CD4-positive, alpha-beta memory T cell (primary cell): ENCODE measurements at regions of chr16 and their contacts with region 1.

Region 1: GRCh38 chr16:370443-370842 is at the start of gene MRPL28:
- DNase-seq: peak; percentile 90 to 95 (median 91)
- H3K4me3 ChIP-seq: peak within 1 kb of the TSS in 1 of 2 donors; percentile 19
- H3K4me3 Mint-ChIP-seq: peak within 1 kb of the TSS; percentile 81 to 96 (median 92)
- H3K27ac ChIP-seq: peak within 1 kb of the TSS; percentile 42
- H3K27ac Mint-ChIP-seq: peak within 1 kb of the TSS; percentile 73 to 95 (median 94)
- H3K4me1 ChIP-seq: peaks cover 26% of the 10 kb centered on the region
- H3K4me1 Mint-ChIP-seq: peaks cover 3 to 20% (median 13%) of the 10 kb centered on the region in 4 donors
- H3K27me3 ChIP-seq: no peaks in the 10 kb centered on the region
- H3K27me3 Mint-ChIP-seq: no peaks in the 10 kb centered on the region
- total RNA-seq, gene MRPL28: 27.9 to 29.2 TPM

Region 2: DNA sequence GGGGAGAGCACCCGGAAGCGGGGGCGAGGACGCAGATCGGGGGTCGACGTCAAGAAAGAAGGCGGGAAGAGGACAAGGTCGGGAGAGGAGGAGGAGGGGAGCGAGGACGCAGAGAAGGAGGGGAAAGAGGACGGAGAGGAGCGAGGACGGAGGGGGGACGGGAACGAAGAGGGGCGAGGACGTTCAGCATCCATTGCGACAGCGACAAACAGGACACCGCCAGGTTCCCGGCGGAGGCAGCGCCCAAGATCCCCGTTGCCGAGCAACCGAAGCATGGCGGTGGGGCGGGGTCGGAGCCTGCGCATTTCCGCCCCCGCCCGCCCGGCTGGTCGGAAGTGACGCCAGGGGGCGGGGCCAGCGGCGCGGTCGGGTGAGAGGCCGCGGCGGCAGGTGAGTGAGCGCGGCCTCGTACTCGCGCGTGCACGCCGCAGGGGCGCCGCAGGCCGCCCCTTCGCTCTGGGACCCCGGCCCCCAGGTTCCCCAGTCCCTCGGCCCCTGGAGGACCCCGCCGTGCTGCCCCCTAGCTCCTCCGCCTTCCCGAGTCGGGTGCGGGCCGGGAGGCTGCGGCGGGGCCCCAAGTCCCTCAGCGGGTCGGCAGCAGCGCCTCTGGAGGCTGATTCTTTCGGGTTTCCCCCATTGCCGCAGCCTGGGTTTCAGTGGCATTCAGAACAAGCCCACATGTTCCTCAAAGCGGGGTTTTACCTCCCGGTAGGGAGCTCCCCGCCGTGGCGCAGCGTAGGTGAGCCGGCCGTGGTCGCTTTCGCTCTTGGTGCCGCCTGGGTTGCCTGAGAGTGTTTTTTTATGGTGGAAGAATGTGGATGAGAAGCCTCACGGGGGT is 135.8 kb before region 1 on chr16 and contains the start of gene FAM234A:
- CTCF ChIA-PET with region 1: no interaction called
- POLR2A ChIA-PET with region 1: interaction called, 10 read pairs
- intact Hi-C with region 1: loop called (anchors 1 kb)
- DNase-seq: peak; percentile 95 to 98 (median 96)
- H3K4me3 ChIP-seq: peak within 1 kb of the TSS; percentile 69 to 91
- H3K4me3 Mint-ChIP-seq: peak within 1 kb of the TSS; percentile 90 to 97 (median 96)
- H3K27ac ChIP-seq: peak within 1 kb of the TSS; percentile 98
- H3K27ac Mint-ChIP-seq: peak within 1 kb of the TSS; percentile 99 to 100 (median 99)
- H3K4me1 ChIP-seq: peaks cover 6% of the 10 kb centered on the region
- H3K4me1 Mint-ChIP-seq: peaks cover 8 to 25% (median 16%) of the 10 kb centered on the region in 4 donors
- H3K27me3 ChIP-seq: no peaks in the 10 kb centered on the region
- H3K27me3 Mint-ChIP-seq: no peaks in the 10 kb centered on the region
- total RNA-seq, gene FAM234A: 34.8 to 41.1 TPM

Region 3: DNA sequence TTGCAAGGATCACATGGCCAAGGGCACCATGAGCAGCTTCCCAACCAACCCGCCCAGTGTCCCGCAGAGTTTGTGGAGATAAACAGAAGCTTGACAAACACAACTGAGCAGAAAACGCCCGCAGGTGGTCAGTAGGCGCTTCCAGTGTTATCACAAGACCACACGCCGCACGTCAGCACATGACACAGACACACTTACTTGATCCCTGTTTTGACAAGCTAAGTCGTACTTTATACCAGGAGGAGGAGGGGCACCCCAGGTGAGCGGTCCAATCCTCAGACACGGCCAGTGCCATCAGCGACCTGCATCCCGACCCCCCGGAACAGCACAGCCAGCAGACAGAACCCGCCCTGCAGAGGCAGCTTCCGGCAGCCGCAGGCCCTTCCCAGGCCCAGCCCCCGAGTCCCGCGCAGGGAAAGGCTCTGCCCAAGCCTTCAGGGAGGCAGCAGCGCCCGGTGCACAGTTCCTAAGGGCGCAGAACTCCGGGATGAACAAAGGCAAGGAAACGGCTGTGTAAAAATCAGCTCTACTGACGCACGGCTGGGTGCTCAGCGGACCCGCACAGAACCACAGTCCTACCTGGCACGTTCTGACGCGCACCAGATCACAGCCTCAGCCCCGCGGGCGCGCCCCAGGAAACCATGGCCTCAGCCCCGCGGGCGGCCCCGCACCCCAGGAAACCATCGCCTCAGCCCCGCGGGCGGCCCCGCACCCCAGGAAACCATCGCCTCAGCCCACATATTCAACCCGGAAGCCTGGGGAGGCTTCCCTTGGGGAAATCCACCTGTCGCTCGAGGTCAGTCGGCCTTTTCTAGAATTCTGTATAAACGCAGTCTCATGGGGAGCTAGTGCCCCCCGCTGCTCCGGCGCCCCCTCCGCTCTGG is 45.8 kb before region 1 on chr16:
- CTCF ChIA-PET with region 1: no interaction called
- POLR2A ChIA-PET with region 1: no interaction called
- intact Hi-C with region 1: no loop called
- DNase-seq: peak; percentile 88 to 93 (median 90)
- H3K4me3 ChIP-seq: peak overlapping the region; percentile 22 to 60
- H3K4me3 Mint-ChIP-seq: peak overlapping the region; percentile 69 to 85 (median 80)
- H3K27ac ChIP-seq: peak overlapping the region; percentile 62
- H3K27ac Mint-ChIP-seq: peak overlapping the region; percentile 94 to 99 (median 97)
- H3K4me1 ChIP-seq: peaks cover 75% of the 10 kb centered on the region
- H3K4me1 Mint-ChIP-seq: peaks cover 40 to 77% (median 50%) of the 10 kb centered on the region in 4 donors
- H3K27me3 ChIP-seq: no peaks in the 10 kb centered on the region
- H3K27me3 Mint-ChIP-seq: no peaks in the 10 kb centered on the region

Region 4: GRCh38 chr16:381789-382717 is 11.6 kb after region 1 on chr16 and contains the start of gene PGAP6:
- CTCF ChIA-PET with region 1: interaction called, 3 read pairs
- POLR2A ChIA-PET with region 1: interaction called, 20 read pairs
- intact Hi-C with region 1: loop called (anchors 1 kb)
- DNase-seq: peak in 4 of 5 donors; percentile 51 to 72 (median 62)
- H3K4me3 ChIP-seq: peak within 1 kb of the TSS; percentile 47 to 74
- H3K4me3 Mint-ChIP-seq: peak within 1 kb of the TSS; percentile 85 to 95 (median 93)
- H3K27ac ChIP-seq: peak within 1 kb of the TSS; percentile 59
- H3K27ac Mint-ChIP-seq: peak within 1 kb of the TSS; percentile 61 to 94 (median 88)
- H3K4me1 ChIP-seq: peaks cover 37% of the 10 kb centered on the region
- H3K4me1 Mint-ChIP-seq: peaks cover 10 to 31% (median 21%) of the 10 kb centered on the region in 4 donors
- H3K27me3 ChIP-seq: no peaks in the 10 kb centered on the region
- H3K27me3 Mint-ChIP-seq: no peaks in the 10 kb centered on the region
- total RNA-seq, gene PGAP6: 72.2 to 73.5 TPM

Region 5: DNA sequence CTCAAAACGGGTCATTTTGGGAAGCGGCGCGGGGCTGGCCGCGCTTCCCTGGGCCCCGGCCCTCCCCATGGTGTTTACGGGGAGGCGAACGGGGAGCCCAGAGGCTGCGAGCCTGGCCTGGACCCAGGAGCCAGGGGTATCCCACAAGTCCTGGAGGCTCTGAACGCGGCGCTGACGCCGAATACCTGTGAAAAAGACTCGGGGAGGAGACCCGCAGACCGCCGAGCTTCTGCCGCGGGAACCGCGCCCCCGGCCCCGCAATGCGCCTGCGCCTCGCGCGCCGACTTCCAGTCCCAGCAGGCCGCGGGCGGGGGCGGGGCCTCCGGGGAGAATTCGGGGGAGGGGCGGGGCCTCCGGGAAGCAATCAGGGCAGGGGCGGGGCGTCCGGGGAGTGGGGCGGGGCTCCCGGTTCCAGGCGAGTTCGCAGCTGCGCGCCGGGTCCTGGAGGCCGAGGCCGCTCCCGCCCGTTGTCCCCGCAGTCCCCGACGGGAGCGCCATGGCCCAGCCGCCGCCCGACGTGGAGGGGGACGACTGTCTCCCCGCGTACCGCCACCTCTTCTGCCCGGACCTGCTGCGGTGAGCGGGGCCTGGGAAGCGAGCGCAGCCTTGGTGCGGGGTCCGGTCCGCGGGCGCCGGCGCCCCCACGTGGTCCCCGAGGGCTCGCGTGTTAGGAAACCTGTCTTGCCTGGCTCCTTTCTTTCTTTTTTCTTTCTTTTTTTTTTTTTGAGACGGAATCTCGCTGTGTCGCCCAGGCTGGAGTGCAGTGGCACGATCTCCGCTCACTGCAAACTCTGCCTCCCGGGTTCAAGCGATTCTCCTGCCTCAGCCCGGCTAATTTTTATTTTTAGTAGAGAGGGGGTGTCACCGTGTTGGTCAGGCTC is 31.3 kb after region 1 on chr16 and contains the start of gene DECR2:
- CTCF ChIA-PET with region 1: interaction called, 4 read pairs
- POLR2A ChIA-PET with region 1: interaction called, 12 read pairs
- intact Hi-C with region 1: no loop called
- DNase-seq: peak; percentile 92 to 96 (median 94)
- H3K4me3 ChIP-seq: peak within 1 kb of the TSS; percentile 61 to 68
- H3K4me3 Mint-ChIP-seq: peak within 1 kb of the TSS; percentile 88 to 94 (median 89)
- H3K27ac ChIP-seq: peak within 1 kb of the TSS; percentile 79
- H3K27ac Mint-ChIP-seq: peak within 1 kb of the TSS; percentile 88 to 96 (median 95)
- H3K4me1 ChIP-seq: peaks cover 13% of the 10 kb centered on the region
- H3K4me1 Mint-ChIP-seq: peaks cover 6 to 25% (median 11%) of the 10 kb centered on the region in 4 donors
- H3K27me3 ChIP-seq: no peaks in the 10 kb centered on the region
- H3K27me3 Mint-ChIP-seq: no peaks in the 10 kb centered on the region
- total RNA-seq, gene DECR2: 5.1 to 7.3 TPM

Region 6: GRCh38 chr16:425082-425718 is 54.8 kb after region 1 on chr16 and contains the start of gene RAB11FIP3:
- CTCF ChIA-PET with region 1: no interaction called
- POLR2A ChIA-PET with region 1: interaction called, 6 read pairs
- intact Hi-C with region 1: loop called (anchors 1 kb)
- DNase-seq: peak; percentile 83 to 89 (median 86)
- H3K4me3 ChIP-seq: peak within 1 kb of the TSS; percentile 65 to 83
- H3K4me3 Mint-ChIP-seq: peak within 1 kb of the TSS; percentile 86 to 94 (median 90)
- H3K27ac ChIP-seq: peak within 1 kb of the TSS; percentile 80
- H3K27ac Mint-ChIP-seq: peak within 1 kb of the TSS; percentile 87 to 98 (median 93)
- H3K4me1 ChIP-seq: peaks cover 35% of the 10 kb centered on the region
- H3K4me1 Mint-ChIP-seq: peaks cover 20 to 41% (median 31%) of the 10 kb centered on the region in 4 donors
- H3K27me3 ChIP-seq: no peaks in the 10 kb centered on the region
- H3K27me3 Mint-ChIP-seq: no peaks in the 10 kb centered on the region
- total RNA-seq, gene RAB11FIP3: 41.8 to 42.6 TPM

Region 7: GRCh38 chr16:457732-458400 is 87.4 kb after region 1 on chr16:
- CTCF ChIA-PET with region 1: no interaction called
- POLR2A ChIA-PET with region 1: no interaction called
- intact Hi-C with region 1: no loop called
- DNase-seq: no peak
- H3K4me3 ChIP-seq: no peak overlapping the region
- H3K4me3 Mint-ChIP-seq: no peak overlapping the region
- H3K27ac ChIP-seq: no peak overlapping the region
- H3K27ac Mint-ChIP-seq: no peak overlapping the region
- H3K4me1 ChIP-seq: no peaks in the 10 kb centered on the region
- H3K4me1 Mint-ChIP-seq: peaks cover 6 to 22% (median 13%) of the 10 kb centered on the region in 4 donors
- H3K27me3 ChIP-seq: no peaks in the 10 kb centered on the region
- H3K27me3 Mint-ChIP-seq: no peaks in the 10 kb centered on the region

Region 8: DNA sequence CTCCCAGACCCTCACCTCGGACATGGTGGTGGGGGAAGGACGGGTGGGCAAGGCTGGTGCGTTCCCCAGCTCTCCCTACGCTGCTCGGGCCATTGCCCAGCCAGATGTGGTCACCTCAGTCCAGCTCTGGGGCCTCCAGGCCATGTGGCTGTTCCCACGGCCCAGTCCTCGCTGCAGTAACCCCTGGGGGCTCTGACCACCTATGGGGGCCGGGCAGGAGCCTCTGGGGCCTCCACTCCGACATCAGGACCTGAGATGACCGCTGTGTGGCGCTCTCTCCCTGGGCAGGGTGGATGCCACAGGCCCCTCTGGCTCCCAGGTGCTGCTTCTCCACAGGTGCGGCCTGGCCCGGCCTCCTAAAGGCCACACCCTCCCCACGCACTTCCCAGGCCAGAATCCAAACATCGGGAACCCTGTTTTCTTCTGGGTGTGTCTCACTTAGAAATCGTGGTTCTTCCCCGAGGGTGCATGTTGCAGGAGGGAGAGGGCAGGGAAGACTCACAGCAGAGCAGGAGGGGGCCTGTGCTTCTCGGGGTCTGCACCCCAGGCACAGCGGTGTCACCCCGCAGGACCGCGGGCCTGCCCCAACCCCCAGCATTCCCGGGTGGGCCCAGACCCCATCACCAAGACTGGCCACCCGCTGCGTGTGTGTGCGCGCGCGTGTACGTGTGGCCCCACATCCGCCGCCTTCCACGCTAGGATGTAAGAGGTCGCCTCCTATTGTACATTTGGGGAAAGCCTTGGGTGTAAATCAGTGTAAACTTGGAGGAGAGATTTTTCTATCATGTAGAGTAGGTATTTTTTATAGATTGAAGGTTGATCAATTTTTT is 151.2 kb after region 1 on chr16:
- CTCF ChIA-PET with region 1: no interaction called
- POLR2A ChIA-PET with region 1: no interaction called
- intact Hi-C with region 1: no loop called
- DNase-seq: no peak
- H3K4me3 ChIP-seq: no peak overlapping the region
- H3K4me3 Mint-ChIP-seq: no peak overlapping the region
- H3K27ac ChIP-seq: no peak overlapping the region
- H3K27ac Mint-ChIP-seq: no peak overlapping the region
- H3K4me1 ChIP-seq: peaks cover 17% of the 10 kb centered on the region
- H3K4me1 Mint-ChIP-seq: peaks cover 7 to 19% (median 12%) of the 10 kb centered on the region in 4 donors
- H3K27me3 ChIP-seq: no peaks in the 10 kb centered on the region
- H3K27me3 Mint-ChIP-seq: no peaks in the 10 kb centered on the region